B cell (primary cell): ENCODE measurements at regions of chr11 and their contacts with region 1.

Region 1: GRCh38 chr11:120511116-120511819 is at the start of gene GRIK4:
- DNase-seq: peak; percentile 85
- ATAC-seq: peak; percentile 89
- H3K4me3 ChIP-seq: peak within 1 kb of the TSS in 3 of 5 experiments; percentile 25 to 41 (median 30)
- H3K4me3 Mint-ChIP-seq: peak within 1 kb of the TSS; percentile 76
- H3K27ac ChIP-seq: no peak within 1 kb of the TSS
- H3K27ac Mint-ChIP-seq: peak within 1 kb of the TSS; percentile 38
- H3K4me1 ChIP-seq: peaks cover 3 to 7% of the 10 kb centered on the region in 2 donors
- H3K4me1 Mint-ChIP-seq: peaks cover 3% of the 10 kb centered on the region
- H3K27me3 ChIP-seq: peaks cover 0 to 38% (median 10%) of the 10 kb centered on the region in 4 experiments
- H3K27me3 Mint-ChIP-seq: peaks cover 71% of the 10 kb centered on the region
- CTCF ChIP-seq: peak; percentile 88
- total RNA-seq, gene GRIK4: 0.27 TPM in 2 replicates

Region 2: GRCh38 chr11:118734031-118734430 is 1777.2 kb before region 1 on chr11:
- CTCF ChIA-PET with region 1: no interaction called
- POLR2A ChIA-PET with region 1: no interaction called
- intact Hi-C with region 1: no loop called
- DNase-seq: no peak
- ATAC-seq: no peak
- H3K4me3 ChIP-seq: no peak overlapping the region
- H3K4me3 Mint-ChIP-seq: no peak overlapping the region
- H3K27ac ChIP-seq: no peak overlapping the region
- H3K27ac Mint-ChIP-seq: no peak overlapping the region
- H3K4me1 ChIP-seq: no peaks in the 10 kb centered on the region
- H3K4me1 Mint-ChIP-seq: no peaks in the 10 kb centered on the region
- H3K27me3 ChIP-seq: no peaks in the 10 kb centered on the region
- H3K27me3 Mint-ChIP-seq: peaks cover 19% of the 10 kb centered on the region
- CTCF ChIP-seq: no peak

Region 3: GRCh38 chr11:120335908-120336640 is 175.2 kb before region 1 on chr11 and contains the start of gene ARHGEF12:
- CTCF ChIA-PET with region 1: interaction called, 3 read pairs
- POLR2A ChIA-PET with region 1: no interaction called
- intact Hi-C with region 1: loop called (anchors 5 kb)
- DNase-seq: peak; percentile 91
- ATAC-seq: peak; percentile 70
- H3K4me3 ChIP-seq: peak within 1 kb of the TSS; percentile 42 to 77 (median 75)
- H3K4me3 Mint-ChIP-seq: peak within 1 kb of the TSS; percentile 93
- H3K27ac ChIP-seq: peak within 1 kb of the TSS; percentile 44 to 56
- H3K27ac Mint-ChIP-seq: peak within 1 kb of the TSS; percentile 91
- H3K4me1 ChIP-seq: peaks cover 22 to 35% of the 10 kb centered on the region in 2 donors
- H3K4me1 Mint-ChIP-seq: peaks cover 35% of the 10 kb centered on the region
- H3K27me3 ChIP-seq: peaks cover 0 to 46% (median 35%) of the 10 kb centered on the region in 4 experiments
- H3K27me3 Mint-ChIP-seq: peaks cover 46% of the 10 kb centered on the region
- CTCF ChIP-seq: no peak
- total RNA-seq, gene ARHGEF12: 21.6 and 23.8 TPM in 2 replicates

Region 4: GRCh38 chr11:120674542-120674941 is 163.3 kb after region 1 on chr11:
- CTCF ChIA-PET with region 1: interaction called, 10 read pairs
- POLR2A ChIA-PET with region 1: no interaction called
- intact Hi-C with region 1: no loop called
- DNase-seq: no peak
- ATAC-seq: no peak
- H3K4me3 ChIP-seq: no peak overlapping the region
- H3K4me3 Mint-ChIP-seq: no peak overlapping the region
- H3K27ac ChIP-seq: no peak overlapping the region
- H3K27ac Mint-ChIP-seq: no peak overlapping the region
- H3K4me1 ChIP-seq: no peaks in the 10 kb centered on the region
- H3K4me1 Mint-ChIP-seq: no peaks in the 10 kb centered on the region
- H3K27me3 ChIP-seq: peaks cover 0 to 10% (median under 1%) of the 10 kb centered on the region in 4 experiments
- H3K27me3 Mint-ChIP-seq: peaks cover 25% of the 10 kb centered on the region
- CTCF ChIP-seq: no peak

Region 5: GRCh38 chr11:120682866-120683265 is 171.6 kb after region 1 on chr11:
- CTCF ChIA-PET with region 1: interaction called, 62 read pairs
- POLR2A ChIA-PET with region 1: no interaction called
- intact Hi-C with region 1: loop called (anchors 1 kb)
- DNase-seq: no peak
- ATAC-seq: no peak
- H3K4me3 ChIP-seq: no peak overlapping the region
- H3K4me3 Mint-ChIP-seq: no peak overlapping the region
- H3K27ac ChIP-seq: no peak overlapping the region
- H3K27ac Mint-ChIP-seq: no peak overlapping the region
- H3K4me1 ChIP-seq: no peaks in the 10 kb centered on the region
- H3K4me1 Mint-ChIP-seq: no peaks in the 10 kb centered on the region
- H3K27me3 ChIP-seq: peaks cover 0 to 9% (median 0%) of the 10 kb centered on the region in 4 experiments
- H3K27me3 Mint-ChIP-seq: peaks cover 33% of the 10 kb centered on the region
- CTCF ChIP-seq: no peak

Region 6: GRCh38 chr11:120801801-120802689 is 290.8 kb after region 1 on chr11:
- CTCF ChIA-PET with region 1: interaction called, 10 read pairs
- POLR2A ChIA-PET with region 1: no interaction called
- intact Hi-C with region 1: no loop called
- DNase-seq: peak; percentile 61
- ATAC-seq: no peak
- H3K4me3 ChIP-seq: no peak overlapping the region
- H3K4me3 Mint-ChIP-seq: no peak overlapping the region
- H3K27ac ChIP-seq: no peak overlapping the region
- H3K27ac Mint-ChIP-seq: no peak overlapping the region
- H3K4me1 ChIP-seq: no peaks in the 10 kb centered on the region
- H3K4me1 Mint-ChIP-seq: no peaks in the 10 kb centered on the region
- H3K27me3 ChIP-seq: peaks cover 0 to 21% (median 2%) of the 10 kb centered on the region in 4 experiments
- H3K27me3 Mint-ChIP-seq: peaks cover 23% of the 10 kb centered on the region
- CTCF ChIP-seq: peak; percentile 95

Region 7: GRCh38 chr11:121194731-121195596 is 683.7 kb after region 1 on chr11:
- CTCF ChIA-PET with region 1: interaction called, 13 read pairs
- POLR2A ChIA-PET with region 1: no interaction called
- intact Hi-C with region 1: no loop called
- DNase-seq: peak; percentile 77
- ATAC-seq: peak; percentile 63
- H3K4me3 ChIP-seq: no peak overlapping the region
- H3K4me3 Mint-ChIP-seq: no peak overlapping the region
- H3K27ac ChIP-seq: no peak overlapping the region
- H3K27ac Mint-ChIP-seq: no peak overlapping the region
- H3K4me1 ChIP-seq: peaks cover 5% of the 10 kb centered on the region in 2 donors
- H3K4me1 Mint-ChIP-seq: peaks cover 8% of the 10 kb centered on the region
- H3K27me3 ChIP-seq: peaks cover 0 to 28% (median 0%) of the 10 kb centered on the region in 4 experiments
- H3K27me3 Mint-ChIP-seq: peaks cover 35% of the 10 kb centered on the region
- CTCF ChIP-seq: peak; percentile 96